Panc1 (cell line): ENCODE measurements at regions of chr1 and their contacts with region 1.

Region 1: DNA sequence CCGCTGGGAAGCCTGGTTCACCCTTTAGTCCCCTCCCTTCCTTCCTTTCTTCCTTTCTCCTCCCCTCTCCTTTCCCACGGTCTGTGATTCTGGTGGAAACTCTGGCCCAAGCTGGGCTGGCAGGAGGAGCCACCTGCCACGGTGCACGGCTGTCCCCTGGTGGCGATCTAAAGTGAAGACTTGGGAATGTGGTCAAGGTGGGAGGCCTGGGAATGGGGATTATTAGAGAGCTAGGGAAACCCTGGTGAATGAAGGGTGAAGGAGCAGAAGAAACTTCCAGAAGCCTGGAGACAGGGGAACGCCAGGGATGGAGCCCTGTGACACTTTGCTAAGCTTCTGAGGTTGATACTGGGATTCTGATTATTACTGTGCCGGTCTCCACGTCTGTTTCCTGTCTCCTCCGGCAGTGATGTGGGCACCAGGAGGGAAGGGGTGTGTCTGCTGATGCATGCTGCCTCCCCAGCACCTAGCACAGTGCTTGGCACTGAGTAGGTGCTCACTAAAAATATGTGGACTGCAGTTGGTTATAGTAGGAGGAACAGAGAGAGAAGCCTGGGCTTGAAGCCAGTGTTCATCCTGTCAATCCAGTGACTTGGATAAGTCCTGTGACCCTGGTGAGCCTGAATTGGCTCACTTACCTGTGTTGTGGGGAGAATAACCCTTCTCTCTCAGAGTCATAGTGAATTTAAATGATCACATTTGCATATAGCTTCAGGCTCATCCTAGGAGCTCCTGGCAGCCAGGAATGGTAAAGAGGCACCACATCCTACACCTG is 71.2 kb upstream of the NBPF3 start:
- DNase-seq: peak; percentile 71
- ATAC-seq: peak; percentile 97
- H3K4me3 ChIP-seq: peak overlapping the region in 1 of 2 experiments; percentile 23; a peak in 1 of 4 replicates
- H3K27ac ChIP-seq: no peak overlapping the region
- H3K4me1 ChIP-seq: no peaks in the 10 kb centered on the region
- H3K27me3 ChIP-seq: no peaks in the 10 kb centered on the region
- CTCF ChIP-seq: peak; percentile 100

Region 2: GRCh38 chr1:21117597-21118001 is 251.1 kb before region 1 on chr1:
- CTCF ChIA-PET with region 1: no interaction called
- POLR2A ChIA-PET with region 1: no interaction called
- in situ Hi-C with region 1: no loop called
- intact Hi-C with region 1: no loop called
- DNase-seq: no peak
- ATAC-seq: no peak
- H3K4me3 ChIP-seq: no peak overlapping the region
- H3K27ac ChIP-seq: no peak overlapping the region
- H3K4me1 ChIP-seq: no peaks in the 10 kb centered on the region
- H3K27me3 ChIP-seq: no peaks in the 10 kb centered on the region
- CTCF ChIP-seq: no peak

Region 3: DNA sequence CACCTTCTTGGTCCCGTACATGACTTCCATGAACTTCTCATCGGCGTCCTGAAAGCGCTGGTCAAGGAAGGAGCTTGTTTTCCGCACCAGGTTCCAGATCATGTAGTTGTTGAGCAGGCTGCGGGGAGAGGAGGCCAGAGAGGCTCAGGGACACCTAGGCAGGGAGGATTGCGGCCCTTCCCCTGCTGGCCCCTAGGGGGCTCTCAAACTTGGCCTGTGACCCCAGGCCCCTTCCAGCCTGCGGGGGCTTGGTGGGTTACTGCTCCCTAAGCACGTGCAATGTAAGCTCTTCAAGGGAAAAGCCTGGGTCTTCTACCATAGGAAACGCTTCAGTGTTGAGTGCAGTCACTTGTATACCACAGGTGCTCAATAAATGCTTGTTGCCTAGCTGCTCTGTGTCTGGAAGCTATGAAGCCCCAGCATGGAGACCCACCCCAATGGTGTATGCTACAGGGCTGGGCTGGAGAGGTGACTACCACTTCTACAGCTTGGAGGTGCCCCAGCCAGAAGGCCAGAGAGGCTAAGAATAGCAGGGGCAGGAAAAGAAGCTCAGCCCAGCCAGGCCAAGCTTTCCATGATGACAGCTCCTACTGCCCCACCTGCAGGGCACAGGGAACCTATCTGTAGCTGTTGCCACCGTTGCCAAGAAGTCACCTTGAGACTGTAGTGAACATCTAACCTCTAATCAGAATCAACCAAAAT is 123.6 kb before region 1 on chr1:
- CTCF ChIA-PET with region 1: interaction called, 5 read pairs
- POLR2A ChIA-PET with region 1: no interaction called
- in situ Hi-C with region 1: loop called (anchors 10 kb)
- intact Hi-C with region 1: no loop called
- DNase-seq: no peak
- ATAC-seq: no peak
- H3K4me3 ChIP-seq: no peak overlapping the region
- H3K27ac ChIP-seq: no peak overlapping the region
- H3K4me1 ChIP-seq: 0 out of 2 replicates have a peak, but pooled peaks cover 9% of the 10 kb centered on the region
- H3K27me3 ChIP-seq: no peaks in the 10 kb centered on the region
- CTCF ChIP-seq: no peak

Region 4: GRCh38 chr1:21355956-21356355 is 12.7 kb before region 1 on chr1:
- CTCF ChIA-PET with region 1: interaction called, 14 read pairs
- POLR2A ChIA-PET with region 1: interaction called, 10 read pairs
- in situ Hi-C with region 1: no loop called
- intact Hi-C with region 1: no loop called
- DNase-seq: no peak
- ATAC-seq: no peak; the same call in 1 of the 2 replicates
- H3K4me3 ChIP-seq: no peak overlapping the region
- H3K27ac ChIP-seq: no peak overlapping the region
- H3K4me1 ChIP-seq: no peaks in the 10 kb centered on the region
- H3K27me3 ChIP-seq: no peaks in the 10 kb centered on the region
- CTCF ChIP-seq: no peak

Region 5: DNA sequence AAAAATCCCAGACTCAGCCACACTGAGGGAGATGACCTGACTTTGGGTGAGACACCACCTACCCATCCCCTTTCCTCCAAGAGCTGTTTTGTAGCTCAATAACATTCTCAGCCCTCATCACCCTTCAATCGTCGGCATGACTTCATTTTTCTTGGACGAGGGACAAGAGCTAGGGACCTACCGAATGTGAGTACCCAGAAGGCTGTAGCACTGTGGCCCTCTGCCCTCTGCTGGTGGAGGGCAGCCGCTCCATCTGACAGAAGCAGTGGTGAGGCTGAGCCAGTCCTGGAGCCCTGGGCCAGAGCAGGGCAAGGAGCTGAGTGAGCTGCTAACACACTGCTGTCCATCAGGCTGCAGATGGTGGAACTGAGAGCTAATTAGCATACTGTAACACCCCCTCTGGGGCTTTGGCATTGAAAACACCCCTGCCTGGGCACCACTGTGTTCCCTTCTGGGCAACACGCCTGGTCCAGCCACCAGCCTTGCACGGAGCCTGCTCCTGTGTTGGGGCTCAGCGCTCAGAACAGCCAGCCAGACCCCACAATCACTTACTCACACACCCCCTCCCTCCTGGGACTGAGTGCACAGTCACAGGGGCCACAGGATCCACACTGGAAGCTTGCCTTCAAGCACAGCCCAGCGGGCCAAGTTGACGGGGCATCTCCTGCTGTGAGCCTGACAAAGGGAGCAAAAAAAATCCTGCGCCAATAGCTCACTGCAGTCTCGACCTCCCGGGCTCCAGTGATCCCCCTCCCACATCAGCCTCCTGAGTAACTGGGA is 122.3 kb after region 1 on chr1:
- CTCF ChIA-PET with region 1: interaction called, 12 read pairs
- POLR2A ChIA-PET with region 1: no interaction called
- in situ Hi-C with region 1: no loop called
- intact Hi-C with region 1: loop called (anchors 10 kb)
- DNase-seq: no peak
- ATAC-seq: peak; percentile 92
- H3K4me3 ChIP-seq: no peak overlapping the region
- H3K27ac ChIP-seq: no peak overlapping the region
- H3K4me1 ChIP-seq: no peaks in the 10 kb centered on the region
- H3K27me3 ChIP-seq: no peaks in the 10 kb centered on the region; the same call in 1 of the 2 replicates
- CTCF ChIP-seq: peak; percentile 76

Region 6: GRCh38 chr1:21573971-21574465 is 205.3 kb after region 1 on chr1:
- CTCF ChIA-PET with region 1: interaction called, 3 read pairs
- POLR2A ChIA-PET with region 1: no interaction called
- in situ Hi-C with region 1: no loop called
- intact Hi-C with region 1: loop called (anchors 2 kb)
- DNase-seq: no peak
- ATAC-seq: peak; percentile 90
- H3K4me3 ChIP-seq: no peak overlapping the region
- H3K27ac ChIP-seq: no peak overlapping the region
- H3K4me1 ChIP-seq: no peaks in the 10 kb centered on the region; the same call in none of the 2 replicates
- H3K27me3 ChIP-seq: no peaks in the 10 kb centered on the region
- CTCF ChIP-seq: no peak; the same call in 1 of the 2 replicates